CD4-positive, alpha-beta T cell (primary cell): ENCODE measurements at regions of chr10 and their contacts with region 1.

Region 1: GRCh38 chr10:104274762-104275721 is 6.1 kb downstream of the GSTO2 start:
- DNase-seq: peak in 13 of 14 experiments; percentile 19 to 73 (median 37)
- ATAC-seq: peak; percentile 94
- H3K4me3 ChIP-seq: peak overlapping the region; percentile 8
- H3K4me3 Mint-ChIP-seq: peak overlapping the region; percentile 15
- H3K27ac ChIP-seq: no peak overlapping the region
- H3K27ac Mint-ChIP-seq: no peak overlapping the region
- H3K4me1 ChIP-seq: peaks cover 9% of the 10 kb centered on the region
- H3K4me1 Mint-ChIP-seq: no peaks in the 10 kb centered on the region
- H3K27me3 ChIP-seq: peaks cover 7 to 12% of the 10 kb centered on the region in 2 experiments
- H3K27me3 Mint-ChIP-seq: peaks cover 18% of the 10 kb centered on the region
- CTCF ChIP-seq: peak; percentile 71

Region 2: GRCh38 chr10:104254493-104255310 is 20.3 kb before region 1 on chr10 and contains the start of gene GSTO1:
- CTCF ChIA-PET with region 1: interaction called, 17 read pairs
- POLR2A ChIA-PET with region 1: interaction called, 102 read pairs
- intact Hi-C with region 1: no loop called
- DNase-seq: peak in 13 of 14 experiments; percentile 13 to 77 (median 46)
- ATAC-seq: peak; percentile 50
- H3K4me3 ChIP-seq: peak within 1 kb of the TSS; percentile 98
- H3K4me3 Mint-ChIP-seq: peak within 1 kb of the TSS; percentile 99
- H3K27ac ChIP-seq: peak within 1 kb of the TSS; percentile 73 to 83
- H3K27ac Mint-ChIP-seq: peak within 1 kb of the TSS; percentile 87
- H3K4me1 ChIP-seq: peaks cover 27% of the 10 kb centered on the region
- H3K4me1 Mint-ChIP-seq: peaks cover 51% of the 10 kb centered on the region
- H3K27me3 ChIP-seq: no peaks in the 10 kb centered on the region
- H3K27me3 Mint-ChIP-seq: no peaks in the 10 kb centered on the region
- CTCF ChIP-seq: no peak
- total RNA-seq, gene GSTO1: 23.9 to 26.1 TPM

Region 3: GRCh38 chr10:104260775-104261115 is 14.3 kb before region 1 on chr10:
- CTCF ChIA-PET with region 1: interaction called, 20 read pairs
- POLR2A ChIA-PET with region 1: interaction called, 102 read pairs
- intact Hi-C with region 1: no loop called
- DNase-seq: peak in 3 of 14 experiments; percentile 15 to 39 (median 34)
- ATAC-seq: peak; percentile 54
- H3K4me3 ChIP-seq: no peak overlapping the region
- H3K4me3 Mint-ChIP-seq: no peak overlapping the region
- H3K27ac ChIP-seq: peak overlapping the region; percentile 4 to 14
- H3K27ac Mint-ChIP-seq: peak overlapping the region; percentile 87
- H3K4me1 ChIP-seq: peaks cover 31% of the 10 kb centered on the region
- H3K4me1 Mint-ChIP-seq: peaks cover 69% of the 10 kb centered on the region
- H3K27me3 ChIP-seq: no peaks in the 10 kb centered on the region
- H3K27me3 Mint-ChIP-seq: no peaks in the 10 kb centered on the region
- CTCF ChIP-seq: no peak

Region 4: DNA sequence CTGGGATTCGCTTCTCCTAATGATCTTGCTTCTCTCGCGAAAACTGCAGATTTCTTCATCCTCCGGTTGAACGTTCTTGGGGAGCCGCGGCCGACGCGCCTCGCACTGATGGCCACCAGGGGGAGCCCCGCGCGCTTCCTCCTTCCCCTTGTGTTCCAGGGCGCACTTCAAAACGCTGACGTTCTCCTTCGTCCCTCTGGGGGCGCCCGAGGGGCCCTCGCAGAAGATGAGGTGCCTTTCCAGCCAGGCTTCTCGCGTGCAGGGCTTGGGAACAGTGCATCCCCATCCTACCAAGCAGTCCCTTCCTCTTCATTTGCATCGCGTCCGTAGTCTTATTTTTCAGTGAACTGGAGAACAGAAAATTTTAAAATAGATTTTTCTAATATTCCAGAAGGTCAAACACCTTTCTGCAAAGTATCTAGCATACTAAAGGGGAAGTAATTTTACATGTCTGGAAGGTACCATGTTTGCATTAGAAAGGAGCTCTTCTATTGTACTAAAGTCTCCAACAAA is 16.5 kb after region 1 on chr10:
- CTCF ChIA-PET with region 1: interaction called, 23 read pairs
- POLR2A ChIA-PET with region 1: no interaction called
- intact Hi-C with region 1: no loop called
- DNase-seq: peak; percentile 81 to 95 (median 86)
- ATAC-seq: peak; percentile 100
- H3K4me3 ChIP-seq: no peak overlapping the region
- H3K4me3 Mint-ChIP-seq: no peak overlapping the region
- H3K27ac ChIP-seq: no peak overlapping the region
- H3K27ac Mint-ChIP-seq: no peak overlapping the region
- H3K4me1 ChIP-seq: peaks cover 8% of the 10 kb centered on the region
- H3K4me1 Mint-ChIP-seq: peaks cover 7% of the 10 kb centered on the region
- H3K27me3 ChIP-seq: peaks cover 0 to 4% of the 10 kb centered on the region in 2 experiments
- H3K27me3 Mint-ChIP-seq: peaks cover 26% of the 10 kb centered on the region
- CTCF ChIP-seq: peak; percentile 100

Region 5: GRCh38 chr10:104353325-104354048 is 78.4 kb after region 1 on chr10 and contains the start of gene CFAP58:
- CTCF ChIA-PET with region 1: interaction called, 9 read pairs
- POLR2A ChIA-PET with region 1: interaction called, 4 read pairs
- intact Hi-C with region 1: loop called in 1 of 2 experiments (anchors 2 kb)
- DNase-seq: peak; percentile 84 to 97 (median 88)
- ATAC-seq: peak; percentile 80
- H3K4me3 ChIP-seq: peak within 1 kb of the TSS; percentile 46
- H3K4me3 Mint-ChIP-seq: peak within 1 kb of the TSS; percentile 26
- H3K27ac ChIP-seq: no peak within 1 kb of the TSS
- H3K27ac Mint-ChIP-seq: no peak within 1 kb of the TSS
- H3K4me1 ChIP-seq: peaks cover 27% of the 10 kb centered on the region
- H3K4me1 Mint-ChIP-seq: peaks cover 12% of the 10 kb centered on the region
- H3K27me3 ChIP-seq: no peaks in the 10 kb centered on the region
- H3K27me3 Mint-ChIP-seq: no peaks in the 10 kb centered on the region
- CTCF ChIP-seq: peak; percentile 84
- total RNA-seq, gene CFAP58: not detected

Region 6: DNA sequence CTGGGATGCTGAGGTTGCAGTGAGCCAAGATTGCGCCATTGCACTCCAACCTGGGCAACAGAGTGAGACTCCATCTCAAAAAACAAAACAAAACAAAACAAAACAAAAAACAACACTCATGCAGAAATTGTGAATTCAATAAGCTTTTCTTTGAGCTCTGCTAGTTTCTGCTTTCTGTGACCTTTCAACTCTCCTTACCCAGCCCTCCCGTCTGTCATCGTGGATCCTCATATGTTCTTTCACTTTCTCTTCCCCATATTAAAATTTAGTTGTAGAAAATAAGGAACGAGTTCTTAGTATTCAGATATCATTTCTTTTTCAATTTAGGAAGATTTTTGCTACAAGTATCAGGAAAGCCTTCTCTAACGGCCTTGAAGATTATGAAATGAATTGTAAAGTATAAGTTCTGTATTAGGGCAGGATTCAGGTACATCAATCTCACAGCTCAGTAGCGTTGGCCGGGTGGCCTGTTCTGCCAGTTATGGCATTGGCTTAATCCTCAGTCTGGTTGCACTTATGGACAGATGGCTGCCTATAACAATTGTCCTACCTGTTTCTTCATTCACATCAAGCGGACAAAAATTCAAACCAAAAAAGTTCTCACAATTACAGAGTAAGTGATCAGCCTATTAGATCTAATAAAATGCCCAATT is 1533.0 kb after region 1 on chr10:
- CTCF ChIA-PET with region 1: no interaction called
- POLR2A ChIA-PET with region 1: no interaction called
- intact Hi-C with region 1: no loop called
- DNase-seq: peak in 1 of 14 experiments; percentile 2
- ATAC-seq: no peak
- H3K4me3 ChIP-seq: no peak overlapping the region
- H3K4me3 Mint-ChIP-seq: no peak overlapping the region
- H3K27ac ChIP-seq: no peak overlapping the region
- H3K27ac Mint-ChIP-seq: no peak overlapping the region
- H3K4me1 ChIP-seq: no peaks in the 10 kb centered on the region
- H3K4me1 Mint-ChIP-seq: no peaks in the 10 kb centered on the region
- H3K27me3 ChIP-seq: no peaks in the 10 kb centered on the region
- H3K27me3 Mint-ChIP-seq: no peaks in the 10 kb centered on the region
- CTCF ChIP-seq: no peak

Region 7: DNA sequence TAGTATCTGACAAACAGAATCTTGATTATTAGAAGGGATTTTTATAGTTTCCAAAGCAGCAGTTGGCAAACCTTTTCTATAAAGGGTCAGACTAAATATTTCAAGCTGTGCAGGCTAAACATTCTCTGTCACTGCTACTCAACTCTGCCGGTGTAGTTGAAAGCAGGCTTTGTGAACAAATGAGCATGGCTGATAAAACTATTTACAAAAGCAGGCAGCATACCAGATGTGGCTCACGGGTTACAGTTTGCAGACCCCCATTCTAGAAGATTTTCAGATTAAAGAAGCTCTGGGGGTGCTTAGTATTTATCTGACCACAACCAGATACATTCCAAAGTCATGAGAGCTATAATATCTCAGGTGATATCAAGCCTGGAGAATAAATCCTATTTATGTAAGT is 1872.0 kb after region 1 on chr10:
- CTCF ChIA-PET with region 1: no interaction called
- POLR2A ChIA-PET with region 1: no interaction called
- intact Hi-C with region 1: no loop called
- DNase-seq: no peak
- ATAC-seq: no peak
- H3K4me3 ChIP-seq: no peak overlapping the region
- H3K4me3 Mint-ChIP-seq: no peak overlapping the region
- H3K27ac ChIP-seq: no peak overlapping the region
- H3K27ac Mint-ChIP-seq: no peak overlapping the region
- H3K4me1 ChIP-seq: no peaks in the 10 kb centered on the region
- H3K4me1 Mint-ChIP-seq: no peaks in the 10 kb centered on the region
- H3K27me3 ChIP-seq: no peaks in the 10 kb centered on the region
- H3K27me3 Mint-ChIP-seq: no peaks in the 10 kb centered on the region
- CTCF ChIP-seq: no peak